K562 (cell line): ENCODE measurements at regions of chr1 and their contacts with region 1.

Region 1: DNA sequence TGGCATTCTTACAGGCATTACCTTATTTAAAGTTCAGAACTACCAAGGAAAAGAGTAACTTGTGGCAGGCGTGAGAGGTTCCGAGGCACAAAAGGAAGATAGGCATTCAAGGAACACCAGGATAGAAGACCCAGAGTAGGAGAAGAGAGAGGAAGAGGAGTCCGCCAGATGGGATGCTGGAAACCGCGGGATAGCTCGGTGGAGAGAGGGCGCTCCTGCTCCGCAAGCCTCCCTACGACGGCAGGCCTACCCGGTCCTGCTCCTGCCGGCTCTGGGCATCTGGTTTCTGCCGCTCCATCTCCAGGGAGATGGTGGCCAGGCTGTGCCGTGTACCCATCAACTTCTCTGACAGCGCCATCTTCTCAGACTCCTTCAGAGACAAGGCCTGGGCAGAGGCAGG is 5.4 kb upstream of the NBPF1 start:
- DNase-seq: peak in 3 of 4 experiments; percentile 47 to 67 (median 62)
- ATAC-seq: no peak
- H3K4me3 ChIP-seq: no peak overlapping the region
- H3K27ac ChIP-seq: no peak overlapping the region
- H3K4me1 ChIP-seq: peaks cover 19 to 39% of the 10 kb centered on the region in 2 experiments
- H3K27me3 ChIP-seq: no peaks in the 10 kb centered on the region
- CTCF ChIP-seq: peak in 1 of 3 experiments; percentile 11; a peak in 1 of 6 replicates
- EP300 ChIP-seq: no peak
- POLR2A ChIP-seq: no peak
- RAD21 ChIP-seq: no peak

Region 2: DNA sequence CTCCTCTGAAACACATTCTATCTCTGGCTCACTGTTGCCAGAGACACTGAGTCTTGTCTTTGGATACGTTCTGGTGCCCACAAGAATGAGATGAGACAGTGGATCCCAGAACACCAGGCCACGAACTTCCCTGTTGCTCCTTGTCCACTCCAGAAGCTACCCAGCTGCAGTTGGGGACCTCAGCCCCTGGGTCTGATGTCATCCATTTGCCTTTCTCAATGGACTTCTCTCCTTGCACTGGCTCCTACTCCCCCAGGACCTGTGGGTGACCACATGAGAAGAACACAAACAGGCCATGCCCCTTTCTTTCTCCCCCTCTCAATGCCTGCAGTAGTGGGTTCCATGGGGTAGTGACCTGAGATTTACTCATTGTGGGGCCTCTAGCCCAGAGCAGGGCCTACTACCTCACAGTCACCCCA is 11.3 kb before region 1 on chr1:
- CTCF ChIA-PET with region 1: no interaction called
- POLR2A ChIA-PET with region 1: interaction called, 23 read pairs
- in situ Hi-C with region 1: no loop called
- intact Hi-C with region 1: no loop called
- DNase-seq: peak in 1 of 4 experiments; percentile 22
- ATAC-seq: no peak
- H3K4me3 ChIP-seq: no peak overlapping the region
- H3K27ac ChIP-seq: no peak overlapping the region
- H3K4me1 ChIP-seq: peaks cover 3 to 6% of the 10 kb centered on the region in 2 experiments; a peak in 3 of 5 replicates
- H3K27me3 ChIP-seq: no peaks in the 10 kb centered on the region
- CTCF ChIP-seq: no peak
- EP300 ChIP-seq: no peak
- POLR2A ChIP-seq: no peak
- RAD21 ChIP-seq: no peak

Region 3: DNA sequence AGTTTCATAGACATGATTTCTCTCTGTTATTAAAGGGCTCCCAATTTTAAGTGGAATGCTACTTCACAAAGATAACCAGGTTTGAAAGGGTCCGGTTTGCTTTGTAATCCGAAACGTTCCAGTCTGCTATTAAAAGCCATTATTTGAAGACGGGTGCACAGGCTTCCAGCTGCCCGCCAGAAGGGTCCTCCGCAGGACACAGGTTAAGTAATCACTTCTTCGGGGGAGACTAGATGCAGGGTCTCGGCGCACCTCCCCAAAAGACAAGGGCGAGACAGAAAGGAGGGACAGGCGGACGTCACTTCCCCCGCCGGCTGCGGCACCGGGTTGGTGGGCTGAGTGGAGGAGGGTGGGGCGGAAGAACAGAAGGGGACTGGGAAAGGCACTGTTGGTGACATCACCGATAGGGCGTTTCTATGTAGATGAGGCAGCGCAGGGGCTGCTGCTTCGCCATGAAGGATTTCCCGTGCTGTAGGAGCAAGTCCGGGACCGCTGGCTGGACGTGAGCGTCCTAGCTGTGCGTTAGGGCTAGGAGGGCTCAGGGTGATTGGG is 285.9 kb after region 1 on chr1:
- CTCF ChIA-PET with region 1: no interaction called
- POLR2A ChIA-PET with region 1: interaction called, 42 read pairs
- in situ Hi-C with region 1: loop called (anchors 25 kb)
- intact Hi-C with region 1: loop called (anchors 1 kb)
- DNase-seq: peak; percentile 94 to 99 (median 95)
- ATAC-seq: peak; percentile 93
- H3K4me3 ChIP-seq: peak overlapping the region; percentile 36
- H3K27ac ChIP-seq: peak overlapping the region; percentile 99
- H3K4me1 ChIP-seq: peaks cover 13 to 19% of the 10 kb centered on the region in 2 experiments; a peak in 4 of 5 replicates
- H3K27me3 ChIP-seq: no peaks in the 10 kb centered on the region
- CTCF ChIP-seq: 0 out of 6 replicates have a peak, but pooled peaks of 1 of the 3 experiments have one; percentile 0
- EP300 ChIP-seq: no peak
- POLR2A ChIP-seq: no peak
- RAD21 ChIP-seq: no peak

Region 4: GRCh38 chr1:17030206-17030605 is 411.5 kb after region 1 on chr1:
- CTCF ChIA-PET with region 1: no interaction called
- POLR2A ChIA-PET with region 1: no interaction called
- in situ Hi-C with region 1: no loop called
- intact Hi-C with region 1: loop called (anchors 5 kb)
- DNase-seq: no peak
- ATAC-seq: no peak
- H3K4me3 ChIP-seq: no peak overlapping the region
- H3K27ac ChIP-seq: no peak overlapping the region
- H3K4me1 ChIP-seq: no peaks in the 10 kb centered on the region
- H3K27me3 ChIP-seq: no peaks in the 10 kb centered on the region
- CTCF ChIP-seq: no peak
- EP300 ChIP-seq: no peak
- POLR2A ChIP-seq: no peak
- RAD21 ChIP-seq: no peak

Region 5: GRCh38 chr1:17236779-17237560 is 618.3 kb after region 1 on chr1:
- CTCF ChIA-PET with region 1: interaction called, 4 read pairs
- POLR2A ChIA-PET with region 1: no interaction called
- in situ Hi-C with region 1: no loop called
- intact Hi-C with region 1: loop called (anchors 5 kb)
- DNase-seq: peak; percentile 87 to 92 (median 91)
- ATAC-seq: peak; percentile 97
- H3K4me3 ChIP-seq: no peak overlapping the region
- H3K27ac ChIP-seq: no peak overlapping the region
- H3K4me1 ChIP-seq: peaks cover 0 to 3% of the 10 kb centered on the region in 2 experiments; a peak in 1 of 5 replicates
- H3K27me3 ChIP-seq: peaks cover 13 to 53% of the 10 kb centered on the region in 2 experiments; a peak in 4 of 5 replicates
- CTCF ChIP-seq: peak; percentile 91 to 95 (median 94)
- EP300 ChIP-seq: no peak
- POLR2A ChIP-seq: no peak
- RAD21 ChIP-seq: peak; percentile 79 to 98